ENCODE measurements at regions of chr3 and their contacts with region 1.

Region 1: GRCh38 chr3:174697310-174697709 is 161.8 kb upstream of the NAALADL2 start:
- DNase-seq: no peak
- H3K4me3 ChIP-seq: no peak overlapping the region
- H3K27ac ChIP-seq: no peak overlapping the region
- H3K4me1 ChIP-seq: no peaks in the 10 kb centered on the region
- H3K27me3 ChIP-seq: no peaks in the 10 kb centered on the region
- CTCF ChIP-seq: no peak
- POLR2A ChIP-seq: no peak

Region 2: DNA sequence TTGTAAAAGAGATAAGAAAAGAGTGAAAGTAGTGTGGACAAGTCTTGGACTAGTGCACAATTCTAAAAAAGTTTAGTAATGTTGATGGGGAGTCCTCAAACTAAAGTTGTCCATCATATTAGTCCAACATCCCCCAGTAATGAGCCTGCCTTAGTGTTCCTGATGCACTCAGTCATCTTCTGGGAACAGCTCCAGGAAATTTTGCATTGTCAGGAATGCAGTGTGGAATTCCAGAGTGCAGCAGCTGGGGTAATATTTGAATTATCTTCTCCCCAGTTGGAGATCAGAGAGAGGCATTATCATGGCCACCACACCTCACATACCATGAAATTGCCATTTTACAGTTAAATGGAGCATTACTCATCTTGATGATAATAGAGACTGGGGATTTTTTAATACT is 367.0 kb before region 1 on chr3:
- intact Hi-C with region 1: no loop called
- DNase-seq: no peak
- H3K4me3 ChIP-seq: no peak overlapping the region
- H3K27ac ChIP-seq: no peak overlapping the region
- H3K4me1 ChIP-seq: no peaks in the 10 kb centered on the region
- H3K27me3 ChIP-seq: no peaks in the 10 kb centered on the region
- CTCF ChIP-seq: no peak
- POLR2A ChIP-seq: no peak

Region 3: DNA sequence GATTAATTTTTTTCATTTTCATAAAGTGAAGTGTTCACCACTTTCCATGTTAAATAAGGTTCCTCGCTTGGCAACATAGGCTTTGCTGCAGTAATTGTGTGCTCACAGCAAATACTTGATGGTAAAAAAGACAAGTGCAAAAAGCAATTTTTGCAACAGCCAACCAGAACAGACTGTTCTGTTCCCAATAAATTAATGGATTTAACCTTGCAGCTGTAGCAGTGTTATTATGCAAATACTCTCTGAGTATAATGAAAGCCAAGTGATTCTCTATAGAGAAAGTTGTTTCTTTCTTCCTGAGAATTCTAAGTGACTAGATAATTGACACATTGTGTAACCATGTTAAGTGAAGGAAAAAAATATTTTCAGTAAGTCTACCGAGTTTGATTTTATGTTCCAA is 21.9 kb before region 1 on chr3:
- intact Hi-C with region 1: no loop called
- DNase-seq: no peak
- H3K4me3 ChIP-seq: no peak overlapping the region
- H3K27ac ChIP-seq: no peak overlapping the region
- H3K4me1 ChIP-seq: no peaks in the 10 kb centered on the region
- H3K27me3 ChIP-seq: no peaks in the 10 kb centered on the region
- CTCF ChIP-seq: no peak
- POLR2A ChIP-seq: no peak

Region 4: GRCh38 chr3:176574786-176575185 is 1877.5 kb after region 1 on chr3:
- intact Hi-C with region 1: loop called (anchors 5 kb)
- DNase-seq: no peak
- H3K4me3 ChIP-seq: no peak overlapping the region
- H3K27ac ChIP-seq: no peak overlapping the region
- H3K4me1 ChIP-seq: no peaks in the 10 kb centered on the region
- H3K27me3 ChIP-seq: no peaks in the 10 kb centered on the region
- CTCF ChIP-seq: no peak
- POLR2A ChIP-seq: no peak